ENCODE measurements at regions of chr15 and their contacts with region 1.

Region 1: GRCh38 chr15:45611305-45611704 is 23.5 kb upstream of the SQOR start:
- DNase-seq: peak; percentile 32
- CTCF ChIP-seq: peak; percentile 36

Region 2: DNA sequence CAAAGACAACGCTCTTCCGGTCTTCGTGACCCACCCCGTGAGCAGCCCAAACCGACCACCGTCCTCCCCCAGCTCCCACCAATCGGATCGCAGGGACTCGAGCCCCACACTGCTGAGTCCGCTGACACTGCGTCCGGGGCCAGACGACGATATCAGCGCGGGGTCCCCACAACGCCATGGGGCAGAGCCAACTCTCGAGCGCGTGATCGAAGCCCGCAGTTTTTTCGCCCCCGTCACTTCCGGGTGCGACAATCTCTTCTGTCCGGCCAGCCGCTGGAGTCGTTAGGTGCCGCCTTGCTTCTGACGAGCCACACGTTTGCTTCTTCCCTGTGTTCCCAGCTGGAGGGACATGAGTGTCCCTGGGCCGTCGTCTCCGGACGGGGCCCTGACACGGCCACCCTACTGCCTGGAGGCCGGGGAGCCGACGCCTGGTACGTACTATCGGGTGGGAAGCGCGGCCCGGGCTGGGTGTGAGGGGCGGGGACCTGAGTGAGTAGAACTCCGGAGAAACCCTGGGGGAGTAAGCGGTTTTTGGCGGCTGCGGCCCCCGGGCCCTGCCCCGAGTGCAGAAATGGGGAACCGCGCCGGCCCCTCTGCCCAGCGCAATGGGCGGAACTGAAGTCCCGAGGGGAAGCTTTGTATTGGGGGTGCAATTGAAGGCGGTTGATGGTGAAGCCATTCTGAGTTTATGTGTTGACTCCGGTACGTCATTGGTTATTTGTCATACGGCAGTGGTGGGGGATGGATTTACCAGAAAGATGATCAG is 24.0 kb before region 1 on chr15 and contains the start of gene BLOC1S6:
- CTCF ChIA-PET with region 1: interaction called, 21 read pairs
- POLR2A ChIA-PET with region 1: interaction called, 6 read pairs
- DNase-seq: peak; percentile 84
- CTCF ChIP-seq: no peak

Region 3: DNA sequence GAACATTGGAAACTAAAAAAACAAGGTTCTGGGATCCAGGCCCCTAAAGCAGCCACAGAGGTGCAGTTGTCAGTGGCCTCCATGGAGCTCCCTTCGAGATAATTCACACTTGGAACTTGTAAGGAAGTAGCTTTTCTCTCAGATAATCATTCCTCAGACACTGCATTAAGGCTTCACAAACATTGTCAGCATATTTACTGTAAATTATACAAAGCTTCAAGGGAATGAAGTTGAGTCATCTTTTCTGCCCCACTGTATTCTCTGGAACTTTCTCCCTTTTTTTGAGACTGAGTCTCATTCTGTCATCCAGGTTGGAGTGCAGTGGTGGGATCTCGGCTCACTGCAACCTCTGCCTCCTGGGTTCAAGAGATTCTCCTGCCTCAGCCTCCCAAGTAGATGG is 17.0 kb before region 1 on chr15:
- CTCF ChIA-PET with region 1: interaction called, 14 read pairs
- POLR2A ChIA-PET with region 1: interaction called, 3 read pairs
- DNase-seq: no peak
- CTCF ChIP-seq: no peak

Region 4: DNA sequence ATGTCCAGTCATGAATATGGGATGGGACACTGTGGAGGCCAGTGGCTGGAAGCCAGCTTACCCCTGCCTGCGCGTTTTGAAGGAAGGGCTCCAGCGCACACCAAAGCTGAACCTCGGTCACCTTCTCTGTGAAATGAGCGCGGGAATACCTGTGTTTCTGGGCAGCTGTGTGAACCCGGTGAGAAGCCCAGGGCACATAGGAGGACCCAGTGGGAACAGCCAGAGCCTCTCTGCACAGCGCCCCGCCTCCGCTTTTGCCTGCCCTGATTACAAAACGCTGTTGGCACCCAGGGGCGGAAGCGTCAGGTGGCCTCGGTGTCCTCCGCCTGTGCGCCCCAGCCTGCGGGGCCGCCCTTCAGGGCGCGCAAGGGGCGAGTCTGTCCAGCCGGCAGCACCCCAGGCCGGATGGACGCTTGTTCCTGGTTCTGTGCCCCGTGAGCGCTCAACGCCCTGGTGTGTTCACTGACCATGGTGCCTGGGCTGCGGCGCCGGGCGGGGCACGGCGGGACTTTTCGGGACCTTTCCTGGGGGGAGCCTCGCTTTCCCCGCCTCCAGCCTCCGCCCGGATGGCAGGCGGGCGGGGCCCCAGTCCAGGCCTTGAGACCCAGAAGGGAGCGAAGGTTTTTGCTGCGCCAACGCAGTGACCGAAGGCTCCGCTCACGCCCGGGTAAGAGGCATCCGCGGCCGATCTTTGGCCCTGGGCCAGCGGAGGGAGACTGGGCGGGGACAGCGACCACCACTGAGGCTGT is 23.3 kb after region 1 on chr15 and contains the start of gene SQOR:
- CTCF ChIA-PET with region 1: interaction called, 37 read pairs
- POLR2A ChIA-PET with region 1: interaction called, 4 read pairs
- DNase-seq: peak; percentile 84
- CTCF ChIP-seq: no peak

Measured in GM10248 (cell line).